ENCODE measurements at regions of chr17 and their contacts with region 1.

Region 1: GRCh38 chr17:7887482-7888183 is 956 bp upstream of the CHD3 start:
- DNase-seq: peak; percentile 60
- ATAC-seq: peak; percentile 76
- H3K4me3 Mint-ChIP-seq: no peak overlapping the region
- H3K27ac Mint-ChIP-seq: no peak overlapping the region
- H3K4me1 Mint-ChIP-seq: peaks cover 8% of the 10 kb centered on the region
- H3K27me3 Mint-ChIP-seq: no peaks in the 10 kb centered on the region
- CTCF ChIP-seq: no peak

Region 2: DNA sequence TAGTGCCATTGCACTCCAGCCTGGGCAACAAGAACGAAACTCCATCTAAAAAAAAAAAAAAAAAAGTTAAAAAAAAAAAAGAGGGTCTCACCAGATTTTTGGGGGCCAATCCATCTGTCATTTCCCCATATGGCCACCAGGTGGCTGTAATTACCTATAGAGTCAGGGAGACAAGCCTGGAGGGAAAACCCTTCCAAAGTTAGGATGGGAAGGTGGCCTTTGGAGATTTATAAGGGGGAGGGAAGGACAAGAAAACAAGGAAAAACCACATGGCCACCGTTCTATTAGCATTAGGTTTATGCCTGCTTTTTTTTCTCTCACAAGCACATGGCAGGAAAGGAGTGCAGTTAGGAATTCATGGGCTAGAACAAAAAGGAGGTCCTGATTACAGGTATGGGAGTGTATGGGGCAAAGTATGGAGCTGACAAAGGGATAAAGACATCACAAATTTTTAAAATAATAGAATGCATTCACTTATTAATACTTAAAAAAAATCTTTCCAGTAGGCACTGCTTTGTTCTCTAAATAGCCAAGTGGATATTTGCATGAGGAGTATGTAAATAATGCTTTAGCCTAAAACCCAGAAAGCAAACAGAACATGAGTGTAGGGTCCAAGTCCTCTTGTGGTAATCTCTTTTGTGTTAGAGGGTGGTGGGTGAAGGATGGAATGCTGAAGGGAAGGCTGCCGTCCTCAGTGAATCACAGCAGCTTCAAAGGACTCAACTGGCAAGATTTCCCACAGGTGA is 24.8 kb before region 1 on chr17:
- CTCF ChIA-PET with region 1: interaction called, 6 read pairs
- POLR2A ChIA-PET with region 1: interaction called, 3 read pairs
- intact Hi-C with region 1: loop called (anchors 1 kb)
- DNase-seq: no peak
- ATAC-seq: no peak
- H3K4me3 Mint-ChIP-seq: no peak overlapping the region
- H3K27ac Mint-ChIP-seq: no peak overlapping the region
- H3K4me1 Mint-ChIP-seq: peaks cover 11% of the 10 kb centered on the region
- H3K27me3 Mint-ChIP-seq: no peaks in the 10 kb centered on the region
- CTCF ChIP-seq: peak; percentile 90

Region 3: GRCh38 chr17:7897773-7898172 is 10.1 kb after region 1 on chr17:
- CTCF ChIA-PET with region 1: no interaction called
- POLR2A ChIA-PET with region 1: interaction called, 16 read pairs
- intact Hi-C with region 1: no loop called
- DNase-seq: no peak
- ATAC-seq: no peak
- H3K4me3 Mint-ChIP-seq: no peak overlapping the region
- H3K27ac Mint-ChIP-seq: no peak overlapping the region
- H3K4me1 Mint-ChIP-seq: no peaks in the 10 kb centered on the region
- H3K27me3 Mint-ChIP-seq: no peaks in the 10 kb centered on the region
- CTCF ChIP-seq: no peak